ENCODE measurements at regions of chrX and their contacts with region 1.

Region 1: DNA sequence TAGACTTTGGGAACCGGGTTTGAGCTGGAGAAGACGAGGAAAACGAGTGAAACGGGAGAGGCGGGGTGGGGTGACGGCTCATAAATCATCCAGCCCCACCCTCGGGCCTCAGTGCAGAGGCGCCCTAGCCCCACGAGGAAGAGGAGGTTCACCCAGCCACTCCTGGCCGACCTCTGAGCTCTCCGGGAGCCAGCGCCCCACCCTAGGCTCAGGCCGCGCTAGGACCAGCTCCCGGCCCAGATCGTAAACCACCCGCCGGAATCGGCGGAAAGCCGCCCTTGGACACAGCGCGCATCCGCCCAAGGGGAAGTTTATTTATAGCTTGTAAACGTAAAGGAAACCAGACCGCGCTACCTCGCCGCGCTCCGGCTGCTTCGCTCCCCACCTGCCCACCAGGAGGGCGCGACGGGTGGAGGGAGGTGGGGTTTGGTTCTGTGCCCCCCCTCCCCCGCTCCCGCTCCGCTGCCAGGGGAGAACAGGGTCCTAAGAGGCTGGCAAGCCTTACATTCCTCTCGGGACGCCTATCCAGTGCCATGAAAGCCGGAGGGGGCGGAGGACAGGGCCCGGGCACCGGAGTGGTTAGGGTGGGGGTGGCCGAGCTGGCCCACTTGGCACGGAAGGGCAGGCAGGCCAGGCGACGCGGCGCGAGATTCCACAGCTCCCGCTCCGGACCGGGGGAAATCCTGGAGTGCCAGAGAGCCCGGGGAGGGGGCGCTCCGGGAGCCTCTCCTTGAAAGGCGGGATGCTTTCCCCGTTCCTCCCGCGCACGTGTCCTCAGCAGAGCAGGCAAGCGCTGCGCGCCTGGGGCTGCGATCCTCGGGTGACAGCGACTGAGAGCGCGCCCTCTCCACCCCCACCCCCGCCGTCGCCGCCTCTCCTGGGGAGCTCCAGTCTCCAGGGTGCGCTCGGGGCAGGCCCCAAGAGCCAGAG is 84.2 kb downstream of the BCOR start:
- DNase-seq: peak; percentile 66 to 75 (median 73)
- H3K4me3 ChIP-seq: peak overlapping the region; percentile 49
- H3K27ac ChIP-seq: peak overlapping the region; percentile 79 to 86
- H3K4me1 ChIP-seq: peaks cover 4% of the 10 kb centered on the region
- H3K27me3 ChIP-seq: no peaks in the 10 kb centered on the region
- CTCF ChIP-seq: no peak
- EP300 ChIP-seq: no peak
- POLR2A ChIP-seq: no peak

Region 2: GRCh38 chrX:39814391-39814790 is 199.1 kb before region 1 on chrX:
- intact Hi-C with region 1: loop called in 1 of 4 experiments (anchors 10 kb)
- DNase-seq: no peak
- H3K4me3 ChIP-seq: no peak overlapping the region
- H3K27ac ChIP-seq: no peak overlapping the region
- H3K4me1 ChIP-seq: peaks cover 3% of the 10 kb centered on the region
- H3K27me3 ChIP-seq: no peaks in the 10 kb centered on the region
- CTCF ChIP-seq: peak in 1 of 3 donors; percentile 34
- EP300 ChIP-seq: no peak
- POLR2A ChIP-seq: no peak

Region 3: GRCh38 chrX:39975094-39975865 is 38.3 kb before region 1 on chrX:
- intact Hi-C with region 1: no loop called
- DNase-seq: no peak
- H3K4me3 ChIP-seq: no peak overlapping the region
- H3K27ac ChIP-seq: no peak overlapping the region
- H3K4me1 ChIP-seq: no peaks in the 10 kb centered on the region
- H3K27me3 ChIP-seq: no peaks in the 10 kb centered on the region
- CTCF ChIP-seq: no peak
- EP300 ChIP-seq: no peak
- POLR2A ChIP-seq: no peak

Region 4: GRCh38 chrX:40031911-40032310 is 18.4 kb after region 1 on chrX:
- intact Hi-C with region 1: no loop called
- DNase-seq: no peak
- H3K4me3 ChIP-seq: no peak overlapping the region
- H3K27ac ChIP-seq: no peak overlapping the region
- H3K4me1 ChIP-seq: no peaks in the 10 kb centered on the region
- H3K27me3 ChIP-seq: no peaks in the 10 kb centered on the region
- CTCF ChIP-seq: no peak
- EP300 ChIP-seq: no peak
- POLR2A ChIP-seq: no peak

Region 5: GRCh38 chrX:40068044-40068443 is 54.5 kb after region 1 on chrX:
- intact Hi-C with region 1: no loop called
- DNase-seq: no peak
- H3K4me3 ChIP-seq: no peak overlapping the region
- H3K27ac ChIP-seq: no peak overlapping the region
- H3K4me1 ChIP-seq: no peaks in the 10 kb centered on the region
- H3K27me3 ChIP-seq: no peaks in the 10 kb centered on the region
- CTCF ChIP-seq: no peak
- EP300 ChIP-seq: no peak
- POLR2A ChIP-seq: no peak

Region 6: DNA sequence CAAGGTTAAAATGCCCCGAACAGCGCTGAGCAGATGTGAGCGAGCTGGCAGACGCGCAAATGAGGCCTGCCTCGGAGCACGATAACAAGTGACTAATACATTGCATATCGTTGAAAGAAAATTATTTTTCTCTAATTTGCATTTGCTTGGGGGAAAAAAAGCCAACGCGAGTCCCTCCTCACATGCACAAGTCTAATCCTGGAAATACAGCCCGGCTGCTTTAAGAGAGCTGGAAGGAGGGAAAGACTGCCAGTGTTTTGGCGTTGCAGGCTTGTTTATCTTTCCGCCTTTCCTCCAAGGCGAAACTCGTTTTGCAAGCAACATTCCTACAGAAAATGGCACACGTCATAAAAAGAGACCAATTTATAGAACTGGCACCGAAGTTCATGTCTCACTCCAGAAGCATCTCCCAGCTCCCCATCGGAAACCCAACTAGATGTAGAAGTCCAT is 71.6 kb after region 1 on chrX:
- intact Hi-C with region 1: loop called in 1 of 4 experiments (anchors 5 kb)
- DNase-seq: peak in 3 of 5 donors; percentile 44 to 62 (median 55)
- H3K4me3 ChIP-seq: no peak overlapping the region
- H3K27ac ChIP-seq: peak overlapping the region in 1 of 2 donors; percentile 34
- H3K4me1 ChIP-seq: peaks cover 10% of the 10 kb centered on the region
- H3K27me3 ChIP-seq: no peaks in the 10 kb centered on the region
- CTCF ChIP-seq: no peak
- EP300 ChIP-seq: no peak
- POLR2A ChIP-seq: no peak

Region 7: GRCh38 chrX:40097497-40098263 is 84.1 kb after region 1 on chrX and contains the start of gene BCOR:
- intact Hi-C with region 1: loop called in 1 of 4 experiments (anchors 5 kb)
- DNase-seq: peak; percentile 77 to 83 (median 77)
- H3K4me3 ChIP-seq: peak within 1 kb of the TSS; percentile 52
- H3K27ac ChIP-seq: peak within 1 kb of the TSS; percentile 78 to 86
- H3K4me1 ChIP-seq: peaks cover 2% of the 10 kb centered on the region
- H3K27me3 ChIP-seq: no peaks in the 10 kb centered on the region
- CTCF ChIP-seq: peak in 1 of 3 donors; percentile 9
- EP300 ChIP-seq: no peak
- POLR2A ChIP-seq: peak; percentile 79
- total RNA-seq, gene BCOR: 25.0 to 57.2 (median 43.2) TPM

Region 8: DNA sequence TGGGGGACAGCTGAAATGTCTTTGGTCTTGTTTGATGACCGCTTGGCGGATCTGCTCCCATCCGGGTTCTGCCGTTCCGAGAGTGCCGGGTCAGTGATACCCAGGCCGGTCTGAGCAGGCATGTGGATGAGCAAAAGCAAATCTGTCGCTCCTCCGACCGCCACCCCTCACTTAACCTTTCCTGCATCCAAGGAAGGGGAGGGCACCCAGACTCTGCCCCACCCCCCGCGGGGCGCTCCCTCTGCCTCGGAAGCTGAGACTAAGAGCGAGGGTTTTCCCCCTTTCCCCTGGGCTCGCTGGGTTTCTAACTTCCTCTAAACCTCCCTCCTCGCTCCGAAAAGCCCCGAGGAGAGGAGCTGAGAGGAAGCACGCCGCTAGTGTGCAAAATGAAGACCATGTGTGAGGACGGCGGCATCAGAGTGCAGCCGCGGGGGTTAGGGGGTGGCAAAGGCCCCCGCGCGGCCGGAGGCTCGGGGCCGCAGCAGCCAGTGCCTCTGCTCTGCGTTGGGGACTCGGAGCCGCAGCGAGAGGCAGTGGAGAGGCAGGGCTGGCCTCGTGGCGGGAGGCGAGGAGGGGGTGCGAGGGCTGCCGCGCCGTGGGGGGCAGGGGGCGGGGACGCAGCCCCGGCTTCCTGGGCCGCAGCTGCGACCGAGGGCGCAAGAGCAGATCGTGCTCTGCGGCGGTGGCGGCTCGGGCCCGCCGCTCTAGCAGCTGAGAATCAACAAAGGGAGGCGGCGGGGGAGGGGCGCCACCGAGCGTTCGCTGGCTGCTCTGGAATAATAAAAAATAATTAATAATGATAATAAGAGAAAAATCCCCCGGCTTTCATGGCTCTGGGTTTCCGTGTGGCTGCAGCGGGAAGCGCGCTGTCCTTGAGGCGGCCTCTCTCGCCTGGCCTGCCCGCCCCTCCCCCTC is 140.1 kb after region 1 on chrX:
- intact Hi-C with region 1: loop called in 3 of 4 experiments (anchors 5 to 10 kb)
- DNase-seq: peak; percentile 51 to 74 (median 71)
- H3K4me3 ChIP-seq: peak overlapping the region; percentile 37
- H3K27ac ChIP-seq: peak overlapping the region; percentile 29 to 86
- H3K4me1 ChIP-seq: no peaks in the 10 kb centered on the region
- H3K27me3 ChIP-seq: no peaks in the 10 kb centered on the region
- CTCF ChIP-seq: no peak
- EP300 ChIP-seq: no peak
- POLR2A ChIP-seq: no peak

Region 9: GRCh38 chrX:40169193-40170101 is 155.9 kb after region 1 on chrX:
- intact Hi-C with region 1: loop called in 1 of 4 experiments (anchors 5 kb)
- DNase-seq: peak; percentile 82 to 88 (median 85)
- H3K4me3 ChIP-seq: no peak overlapping the region
- H3K27ac ChIP-seq: peak overlapping the region; percentile 62 to 89
- H3K4me1 ChIP-seq: peaks cover 2% of the 10 kb centered on the region
- H3K27me3 ChIP-seq: no peaks in the 10 kb centered on the region
- CTCF ChIP-seq: peak in 2 of 3 donors; percentile 21 to 42
- EP300 ChIP-seq: no peak
- POLR2A ChIP-seq: no peak